Activated naive CD4-positive, alpha-beta T cell treated with anti-CD3 and anti-CD28 coated beads, Interleukin-2, amount 10 ng/mL, durations not matched to agents 7 days and 5 days (primary cell): ENCODE measurements at regions of chr17 and their contacts with region 1.

Region 1: DNA sequence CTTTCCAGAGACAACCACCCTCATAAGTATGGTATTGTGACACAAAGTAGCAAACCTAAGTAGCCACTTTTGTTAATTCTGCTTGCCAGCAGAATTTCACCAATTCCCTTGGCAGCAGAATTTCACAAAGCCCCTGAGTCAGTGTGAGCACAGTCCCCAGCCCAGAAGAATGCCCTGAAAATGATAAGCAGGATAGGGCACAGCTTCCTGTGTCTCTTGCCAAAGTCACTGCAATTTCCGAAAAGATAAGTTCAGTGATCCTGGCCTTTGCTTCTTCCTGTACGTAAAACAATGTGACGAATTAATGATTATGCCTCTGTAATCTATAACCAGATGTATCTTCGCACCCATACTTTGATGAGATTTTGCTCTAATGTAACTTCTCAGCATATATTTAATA is 16.0 kb upstream of the WIPF2 start:
- DNase-seq: no peak
- H3K4me3 Mint-ChIP-seq: no peak overlapping the region
- H3K27ac Mint-ChIP-seq: no peak overlapping the region
- H3K4me1 Mint-ChIP-seq: peaks cover 6% of the 10 kb centered on the region
- H3K27me3 Mint-ChIP-seq: peaks cover 48% of the 10 kb centered on the region

Region 2: DNA sequence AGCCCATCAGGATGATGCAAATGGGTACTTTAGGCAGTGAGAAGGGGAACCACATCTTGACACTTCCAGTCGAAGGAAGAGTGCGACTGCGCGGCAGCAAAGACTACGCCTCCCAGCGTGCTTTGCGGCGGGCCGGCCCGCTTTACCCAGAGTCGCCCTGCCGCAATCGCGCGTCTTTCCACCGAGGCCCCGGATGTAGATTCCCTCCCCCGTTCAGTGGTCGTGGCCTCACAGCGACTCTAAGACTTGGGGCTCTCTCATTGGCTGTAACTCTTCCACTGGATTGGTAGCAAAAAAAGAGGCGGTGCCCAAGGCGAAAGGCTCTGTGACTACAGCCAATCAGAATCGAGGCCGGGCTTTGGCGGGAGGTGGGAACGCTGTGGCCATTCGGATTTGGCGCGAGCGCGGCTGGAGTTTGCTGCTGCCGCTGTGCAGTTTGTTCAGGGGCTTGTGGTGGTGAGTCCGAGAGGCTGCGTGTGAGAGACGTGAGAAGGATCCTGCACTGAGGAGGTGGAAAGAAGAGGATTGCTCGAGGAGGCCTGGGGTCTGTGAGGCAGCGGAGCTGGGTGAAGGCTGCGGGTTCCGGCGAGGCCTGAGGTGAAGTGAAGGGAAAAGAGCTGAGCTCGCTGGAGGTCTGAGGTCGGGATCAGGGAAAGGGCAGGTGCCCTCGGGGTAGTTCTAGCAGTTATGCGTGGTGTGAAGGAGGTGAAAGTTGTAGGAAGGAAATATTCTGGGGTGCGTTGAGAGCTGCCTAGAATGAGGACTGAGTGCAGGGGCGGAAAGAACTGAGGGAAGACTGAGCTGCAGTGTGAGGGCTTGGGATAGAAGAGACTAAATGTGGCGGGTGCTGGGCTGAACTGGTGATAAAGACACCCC is 84.6 kb after region 1 on chr17 and contains the start of gene CDC6:
- CTCF ChIA-PET with region 1: interaction called, 20 read pairs
- DNase-seq: peak; percentile 99
- H3K4me3 Mint-ChIP-seq: peak within 1 kb of the TSS; percentile 100
- H3K27ac Mint-ChIP-seq: peak within 1 kb of the TSS; percentile 98
- H3K4me1 Mint-ChIP-seq: peaks cover 53% of the 10 kb centered on the region
- H3K27me3 Mint-ChIP-seq: peaks cover 3% of the 10 kb centered on the region